CD4-positive, alpha-beta T cell (primary cell): ENCODE measurements at regions of chr11 and their contacts with region 1.

Region 1: GRCh38 chr11:72112321-72113219 is at the start of gene ANAPC15:
- DNase-seq: peak; percentile 93 to 99 (median 97)
- ATAC-seq: peak; percentile 84
- H3K4me3 ChIP-seq: peak within 1 kb of the TSS; percentile 68
- H3K4me3 Mint-ChIP-seq: peak within 1 kb of the TSS; percentile 93
- H3K27ac ChIP-seq: peak within 1 kb of the TSS; percentile 97 to 98
- H3K27ac Mint-ChIP-seq: peak within 1 kb of the TSS; percentile 98
- H3K4me1 ChIP-seq: peaks cover 17% of the 10 kb centered on the region
- H3K4me1 Mint-ChIP-seq: peaks cover 19% of the 10 kb centered on the region
- H3K27me3 ChIP-seq: no peaks in the 10 kb centered on the region
- H3K27me3 Mint-ChIP-seq: no peaks in the 10 kb centered on the region
- CTCF ChIP-seq: no peak
- total RNA-seq, gene ANAPC15: 48.8 to 52.5 TPM

Region 2: GRCh38 chr11:71928737-71929452 is 183.7 kb before region 1 on chr11 and contains the start of gene RNF121:
- CTCF ChIA-PET with region 1: no interaction called
- POLR2A ChIA-PET with region 1: interaction called, 17 read pairs
- intact Hi-C with region 1: loop called (anchors 1 to 2 kb)
- DNase-seq: peak; percentile 93 to 98 (median 97)
- ATAC-seq: peak; percentile 86
- H3K4me3 ChIP-seq: peak within 1 kb of the TSS; percentile 79
- H3K4me3 Mint-ChIP-seq: peak within 1 kb of the TSS; percentile 96
- H3K27ac ChIP-seq: peak within 1 kb of the TSS; percentile 92 to 95
- H3K27ac Mint-ChIP-seq: peak within 1 kb of the TSS; percentile 93
- H3K4me1 ChIP-seq: peaks cover 32% of the 10 kb centered on the region
- H3K4me1 Mint-ChIP-seq: peaks cover 57% of the 10 kb centered on the region
- H3K27me3 ChIP-seq: no peaks in the 10 kb centered on the region
- H3K27me3 Mint-ChIP-seq: no peaks in the 10 kb centered on the region
- CTCF ChIP-seq: no peak
- total RNA-seq, gene RNF121: 10.1 to 10.4 TPM

Region 3: GRCh38 chr11:72080256-72080974 is 32.2 kb before region 1 on chr11 and contains the starts of genes LRRC51 and NUMA1:
- CTCF ChIA-PET with region 1: interaction called, 4 read pairs
- POLR2A ChIA-PET with region 1: interaction called, 4 read pairs
- intact Hi-C with region 1: loop called (anchors 1 to 2 kb)
- DNase-seq: peak; percentile 97 to 100 (median 99)
- ATAC-seq: peak; percentile 84
- H3K4me3 ChIP-seq: peak within 1 kb of the TSS; percentile 73
- H3K4me3 Mint-ChIP-seq: peak within 1 kb of the TSS; percentile 95
- H3K27ac ChIP-seq: peak within 1 kb of the TSS; percentile 82 to 93
- H3K27ac Mint-ChIP-seq: peak within 1 kb of the TSS; percentile 92
- H3K4me1 ChIP-seq: peaks cover 31% of the 10 kb centered on the region
- H3K4me1 Mint-ChIP-seq: peaks cover 41% of the 10 kb centered on the region
- H3K27me3 ChIP-seq: no peaks in the 10 kb centered on the region
- H3K27me3 Mint-ChIP-seq: no peaks in the 10 kb centered on the region
- CTCF ChIP-seq: no peak
- total RNA-seq, gene LRRC51: 0.87 to 1.1 TPM
- total RNA-seq, gene NUMA1: 191 to 197 TPM

Region 4: GRCh38 chr11:72141066-72141465 is 28.5 kb after region 1 on chr11:
- CTCF ChIA-PET with region 1: interaction called, 10 read pairs
- POLR2A ChIA-PET with region 1: interaction called, 4 read pairs
- intact Hi-C with region 1: loop called in 1 of 2 experiments (anchors 2 kb)
- DNase-seq: peak in 1 of 14 experiments; percentile 4
- ATAC-seq: peak; percentile 25
- H3K4me3 ChIP-seq: no peak overlapping the region
- H3K4me3 Mint-ChIP-seq: no peak overlapping the region
- H3K27ac ChIP-seq: no peak overlapping the region
- H3K27ac Mint-ChIP-seq: no peak overlapping the region
- H3K4me1 ChIP-seq: no peaks in the 10 kb centered on the region
- H3K4me1 Mint-ChIP-seq: no peaks in the 10 kb centered on the region
- H3K27me3 ChIP-seq: no peaks in the 10 kb centered on the region
- H3K27me3 Mint-ChIP-seq: peaks cover 11% of the 10 kb centered on the region
- CTCF ChIP-seq: no peak

Region 5: DNA sequence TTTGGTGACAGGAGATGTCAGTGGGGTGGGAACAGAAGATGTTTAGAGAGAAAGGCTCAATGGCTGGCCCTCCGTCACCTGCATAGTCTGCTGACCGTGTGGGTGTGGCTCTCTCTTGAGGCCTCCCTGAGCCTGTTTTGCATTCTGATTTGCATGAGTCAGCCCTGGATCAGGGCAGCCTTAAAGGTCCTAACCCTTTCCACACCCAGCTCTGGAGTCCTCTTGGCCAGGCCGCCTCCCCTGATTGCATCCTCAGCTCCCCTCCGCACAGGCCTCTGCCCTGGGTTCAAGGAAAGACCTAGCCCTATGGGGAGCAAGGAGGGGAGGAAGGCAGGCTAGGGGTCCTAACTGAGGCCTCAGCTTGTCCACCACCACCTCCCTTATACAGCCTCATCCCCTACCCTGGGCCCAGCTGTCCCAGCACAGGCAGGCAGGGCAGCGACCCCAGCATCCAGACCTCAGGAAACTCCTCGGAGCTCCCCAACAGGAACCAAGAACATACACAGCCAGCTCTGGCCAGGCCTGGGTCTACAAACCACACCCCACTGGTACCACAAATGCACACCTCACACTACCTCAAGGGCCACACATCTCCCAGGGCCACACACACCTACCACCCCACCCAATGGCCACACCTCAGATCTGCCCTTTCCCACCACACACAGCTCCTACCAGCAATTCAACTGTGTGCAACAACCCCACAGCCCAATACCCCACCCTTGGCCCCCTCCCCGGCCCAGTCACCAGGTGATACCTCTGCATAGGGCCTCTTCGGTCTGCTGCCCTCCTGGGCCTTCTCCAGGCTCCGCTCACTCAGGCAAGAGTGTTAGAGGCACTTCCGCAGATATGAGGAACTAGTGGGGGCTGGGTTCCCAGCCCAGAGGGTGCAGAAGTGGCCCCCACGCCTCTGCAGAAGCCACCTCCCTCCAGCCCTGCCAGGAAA is 625.9 kb after region 1 on chr11:
- CTCF ChIA-PET with region 1: no interaction called
- POLR2A ChIA-PET with region 1: no interaction called
- intact Hi-C with region 1: no loop called
- DNase-seq: peak in 3 of 14 experiments; percentile 28 to 68 (median 56)
- ATAC-seq: no peak
- H3K4me3 ChIP-seq: peak overlapping the region; percentile 38
- H3K4me3 Mint-ChIP-seq: peak overlapping the region; percentile 17
- H3K27ac ChIP-seq: peak overlapping the region; percentile 51 to 83
- H3K27ac Mint-ChIP-seq: peak overlapping the region; percentile 95
- H3K4me1 ChIP-seq: peaks cover 74% of the 10 kb centered on the region
- H3K4me1 Mint-ChIP-seq: peaks cover 70% of the 10 kb centered on the region
- H3K27me3 ChIP-seq: no peaks in the 10 kb centered on the region
- H3K27me3 Mint-ChIP-seq: no peaks in the 10 kb centered on the region
- CTCF ChIP-seq: no peak